SK-N-SH (cell line): ENCODE measurements at regions of chr12 and their contacts with region 1.

Region 1: DNA sequence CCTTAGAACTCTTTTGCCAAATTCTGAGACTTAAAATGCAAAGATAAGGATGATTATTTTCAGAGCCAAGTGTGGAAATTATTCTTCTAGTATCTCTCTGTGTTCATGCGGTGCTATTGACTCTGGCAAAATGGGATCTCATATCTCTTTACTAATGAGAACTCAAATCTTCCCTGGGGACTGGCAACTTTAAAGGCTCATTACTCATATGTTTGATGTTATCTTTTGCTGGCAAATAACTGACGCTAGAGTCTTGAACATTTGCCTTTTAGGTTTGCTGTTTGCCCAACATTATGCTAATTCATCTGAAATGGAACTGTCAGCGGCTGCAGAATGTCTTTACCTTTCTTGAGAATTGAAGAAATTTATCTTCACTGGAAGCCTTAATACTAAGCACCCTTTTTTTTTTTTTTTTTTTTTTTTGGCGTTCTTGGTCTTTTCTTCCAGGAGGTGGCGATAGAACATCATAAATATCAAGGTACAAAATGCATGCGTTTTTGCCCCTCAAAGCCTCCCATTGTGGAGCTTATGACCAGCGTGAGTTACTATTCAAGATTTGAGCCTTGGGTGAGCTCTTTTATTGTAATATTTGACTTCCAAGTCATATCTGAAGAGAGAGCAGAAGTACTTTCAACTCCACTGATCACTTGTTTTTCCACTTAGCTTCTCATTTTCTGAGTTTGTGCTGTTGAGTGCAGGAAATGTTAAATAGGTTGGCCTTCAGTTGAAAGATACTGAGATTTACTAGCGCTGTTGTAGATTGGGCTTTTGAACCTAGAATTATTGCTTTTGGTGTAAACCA is 86.6 kb downstream of the CAND1 start:
- DNase-seq: peak; percentile 40
- H3K4me3 ChIP-seq: peak overlapping the region in 1 of 2 experiments; percentile 38; a peak in 1 of 4 replicates
- H3K27ac ChIP-seq: peak overlapping the region in 1 of 2 experiments; percentile 62; a peak in 1 of 4 replicates
- H3K4me1 ChIP-seq: peaks cover 0 to 4% of the 10 kb centered on the region in 2 experiments; a peak in 1 of 4 replicates
- H3K27me3 ChIP-seq: no peaks in the 10 kb centered on the region
- CTCF ChIP-seq: peak; percentile 83
- EP300 ChIP-seq: peak in 1 of 2 experiments; percentile 16; a peak in 1 of 4 replicates
- RAD21 ChIP-seq: peak; percentile 87

Region 2: DNA sequence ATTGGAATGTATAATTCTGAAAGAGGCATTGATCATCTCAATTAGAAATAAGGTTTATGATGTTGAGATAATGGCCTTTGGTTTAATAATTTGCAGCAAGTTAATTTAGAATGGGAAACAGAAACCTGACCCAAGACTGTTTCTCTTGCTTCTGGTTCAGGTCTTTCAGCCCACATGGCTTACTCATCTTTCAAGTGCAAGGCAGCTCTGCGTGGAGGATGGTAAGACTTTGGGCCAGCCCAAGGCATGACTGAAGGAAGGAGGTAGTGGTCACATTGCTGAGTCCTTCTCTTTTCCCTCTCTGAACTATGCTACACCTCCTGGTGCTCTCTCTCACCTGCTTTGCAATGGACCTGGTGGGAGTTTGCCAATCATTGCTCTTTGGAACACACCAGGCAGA is 12.1 kb after region 1 on chr12:
- CTCF ChIA-PET with region 1: interaction called, 14 read pairs
- POLR2A ChIA-PET with region 1: no interaction called
- DNase-seq: no peak
- H3K4me3 ChIP-seq: no peak overlapping the region
- H3K27ac ChIP-seq: no peak overlapping the region
- H3K4me1 ChIP-seq: no peaks in the 10 kb centered on the region
- H3K27me3 ChIP-seq: no peaks in the 10 kb centered on the region
- CTCF ChIP-seq: no peak
- EP300 ChIP-seq: no peak
- RAD21 ChIP-seq: no peak

Region 3: GRCh38 chr12:67413578-67413977 is 57.8 kb after region 1 on chr12:
- CTCF ChIA-PET with region 1: interaction called, 12 read pairs
- POLR2A ChIA-PET with region 1: no interaction called
- DNase-seq: peak; percentile 13
- H3K4me3 ChIP-seq: no peak overlapping the region
- H3K27ac ChIP-seq: no peak overlapping the region
- H3K4me1 ChIP-seq: peaks cover 0 to 10% of the 10 kb centered on the region in 2 experiments; a peak in 1 of 4 replicates
- H3K27me3 ChIP-seq: no peaks in the 10 kb centered on the region
- CTCF ChIP-seq: no peak
- EP300 ChIP-seq: no peak
- RAD21 ChIP-seq: no peak